HAP-1 (cell line): ENCODE measurements at regions of chr15 and their contacts with region 1.

Region 1: GRCh38 chr15:61871926-61872522 is 188.2 kb downstream of the VPS13C start:
- DNase-seq: peak in 1 of 2 experiments; percentile 70
- H3K4me3 ChIP-seq: no peak overlapping the region
- H3K4me1 ChIP-seq: no peaks in the 10 kb centered on the region
- H3K27me3 ChIP-seq: no peaks in the 10 kb centered on the region

Region 2: GRCh38 chr15:61534986-61535385 is 337.0 kb before region 1 on chr15:
- in situ Hi-C with region 1: no loop called
- DNase-seq: no peak
- H3K4me3 ChIP-seq: no peak overlapping the region
- H3K4me1 ChIP-seq: no peaks in the 10 kb centered on the region
- H3K27me3 ChIP-seq: no peaks in the 10 kb centered on the region

Region 3: GRCh38 chr15:61702224-61703020 is 169.6 kb before region 1 on chr15:
- in situ Hi-C with region 1: no loop called
- DNase-seq: no peak
- H3K4me3 ChIP-seq: no peak overlapping the region
- H3K4me1 ChIP-seq: no peaks in the 10 kb centered on the region
- H3K27me3 ChIP-seq: no peaks in the 10 kb centered on the region

Region 4: DNA sequence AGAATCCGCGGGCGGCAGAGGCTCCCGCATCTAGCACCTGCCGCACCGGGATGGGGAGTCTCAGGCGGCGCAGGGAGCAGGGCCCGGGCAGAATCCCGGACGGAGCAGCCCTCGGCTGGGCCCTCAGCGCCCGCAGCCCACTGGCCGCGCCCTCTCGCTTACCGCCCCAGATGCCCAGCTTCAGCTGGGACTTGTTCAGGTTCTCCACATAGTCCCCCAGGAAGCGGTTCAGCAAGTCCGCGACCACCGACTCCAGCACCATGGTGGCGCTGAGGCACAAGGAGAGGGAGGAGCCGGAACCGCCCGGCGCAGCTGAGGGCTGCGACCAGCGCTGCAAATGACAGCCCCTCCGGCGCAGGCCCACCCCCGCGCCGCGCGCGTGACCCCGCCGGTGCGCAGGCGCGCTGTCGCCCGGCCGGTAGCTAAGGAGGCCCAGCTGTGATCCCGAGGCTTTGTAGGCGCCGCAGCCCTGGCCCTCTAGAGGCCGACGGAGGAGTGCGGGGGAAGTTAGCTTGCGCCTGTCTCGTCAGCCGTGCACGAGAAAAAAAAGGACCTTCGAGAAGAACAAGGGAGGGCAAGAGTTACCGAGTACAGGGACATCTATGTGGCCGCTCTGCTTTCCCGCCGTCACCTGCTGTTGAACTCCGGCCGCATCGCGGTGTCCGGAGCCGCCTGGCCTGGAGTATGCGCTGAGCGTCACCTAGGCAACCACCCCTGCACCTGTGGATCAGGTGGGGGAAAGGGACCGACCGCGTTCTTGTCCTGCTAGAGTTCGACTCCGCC is 188.3 kb after region 1 on chr15 and contains the start of gene VPS13C:
- in situ Hi-C with region 1: loop called (anchors 10 kb)
- DNase-seq: peak; percentile 98 to 100
- H3K4me3 ChIP-seq: peak within 1 kb of the TSS; percentile 88
- H3K4me1 ChIP-seq: peaks cover 22% of the 10 kb centered on the region
- H3K27me3 ChIP-seq: no peaks in the 10 kb centered on the region

Region 5: GRCh38 chr15:62306851-62307504 is 435.0 kb after region 1 on chr15:
- in situ Hi-C with region 1: loop called (anchors 25 kb)
- DNase-seq: peak; percentile 85 to 98
- H3K4me3 ChIP-seq: no peak overlapping the region
- H3K4me1 ChIP-seq: no peaks in the 10 kb centered on the region
- H3K27me3 ChIP-seq: no peaks in the 10 kb centered on the region